ENCODE measurements at regions of chr3 and their contacts with region 1.

Region 1: DNA sequence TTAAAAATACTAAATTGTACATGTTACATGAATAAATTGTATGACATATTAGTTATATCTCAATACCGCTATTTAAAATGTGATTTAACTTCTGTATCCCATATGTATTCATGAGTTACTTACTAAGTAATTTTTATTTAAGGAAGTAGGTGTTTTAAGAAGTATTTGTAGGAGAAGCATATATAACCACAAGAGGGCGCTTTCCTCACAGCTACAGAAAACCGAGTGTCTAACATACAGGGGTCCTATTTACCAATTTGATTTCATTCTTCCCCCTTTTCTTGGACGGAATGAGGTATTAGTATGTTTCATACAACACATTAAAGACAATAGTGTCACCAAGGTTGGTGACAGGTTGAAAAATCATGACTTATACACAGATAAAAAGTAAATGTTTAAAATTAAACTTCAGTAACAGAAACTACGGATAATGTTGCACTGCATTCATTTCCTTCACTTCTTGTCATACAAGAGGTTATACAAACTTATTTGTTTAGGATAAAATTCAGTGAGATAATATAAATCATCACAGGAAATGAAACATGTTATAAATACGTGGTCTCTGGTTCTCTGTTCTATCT is 253.6 kb downstream of the MAGI1 start:
- DNase-seq: no peak

Region 2: DNA sequence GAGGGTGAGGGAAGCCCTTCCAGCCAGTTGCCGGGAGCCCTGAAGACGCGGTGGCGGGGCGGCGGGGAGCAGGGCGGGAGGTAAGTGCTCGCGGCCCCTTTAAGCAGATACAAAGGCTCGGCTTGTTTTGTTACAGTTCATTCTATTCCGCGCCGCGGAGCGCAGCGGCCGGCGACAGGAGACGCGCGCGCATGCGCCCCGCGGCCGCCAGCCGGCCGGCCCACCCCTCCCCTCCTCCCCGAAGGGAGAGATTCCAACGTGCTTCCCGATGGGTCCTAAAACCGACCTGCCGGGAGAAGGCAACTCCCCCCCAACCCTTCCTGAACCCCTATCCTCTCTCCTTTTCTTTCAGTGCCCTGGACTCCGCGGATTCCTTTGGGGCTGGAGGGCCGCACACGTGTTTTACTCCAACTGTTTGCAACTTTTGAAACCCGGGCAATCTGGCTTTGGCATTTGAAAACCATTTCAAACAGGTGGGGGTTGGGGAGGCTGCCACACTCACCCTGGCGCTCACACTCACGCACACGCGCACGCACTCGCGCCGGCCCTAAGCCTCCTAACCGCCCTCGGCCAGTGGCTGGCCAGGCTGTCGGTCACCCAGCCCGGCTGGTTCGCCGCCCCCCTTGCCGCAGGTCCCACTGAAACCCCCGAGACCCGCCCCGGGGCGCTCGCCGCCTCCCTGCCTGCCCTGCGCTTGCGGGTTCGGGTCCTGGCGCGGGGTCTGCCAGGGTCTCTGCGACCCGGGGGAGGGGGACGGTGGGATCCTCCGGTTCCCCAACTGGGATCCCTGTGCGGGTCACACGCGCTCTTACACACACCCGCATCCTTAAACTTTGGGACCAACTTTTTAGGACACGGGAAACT is 253.8 kb after region 1 on chr3 and contains the start of gene MAGI1:
- intact Hi-C with region 1: loop called in 1 of 2 experiments (anchors 10 kb)
- DNase-seq: peak; percentile 95
- total RNA-seq, gene MAGI1: 27.9 to 31.5 TPM

Region 3: GRCh38 chr3:66138336-66139313 is 353.5 kb after region 1 on chr3:
- intact Hi-C with region 1: loop called (anchors 5 to 10 kb)
- DNase-seq: no peak

Region 4: GRCh38 chr3:66469220-66469904 is 684.2 kb after region 1 on chr3:
- intact Hi-C with region 1: no loop called
- DNase-seq: no peak

Measured in posterior vena cava (tissue), 2 donors.